ENCODE measurements at regions of chr14 and their contacts with region 1.

Region 1: GRCh38 chr14:53152890-53153701 is at the start of gene DDHD1:
- DNase-seq: peak; percentile 83
- H3K4me3 Mint-ChIP-seq: peak within 1 kb of the TSS; percentile 100
- H3K27ac Mint-ChIP-seq: peak within 1 kb of the TSS; percentile 99
- H3K4me1 Mint-ChIP-seq: peaks cover 53% of the 10 kb centered on the region
- H3K27me3 Mint-ChIP-seq: peaks cover 2% of the 10 kb centered on the region
- total RNA-seq, gene DDHD1: 85.5 and 93.1 TPM in 2 replicates

Region 2: DNA sequence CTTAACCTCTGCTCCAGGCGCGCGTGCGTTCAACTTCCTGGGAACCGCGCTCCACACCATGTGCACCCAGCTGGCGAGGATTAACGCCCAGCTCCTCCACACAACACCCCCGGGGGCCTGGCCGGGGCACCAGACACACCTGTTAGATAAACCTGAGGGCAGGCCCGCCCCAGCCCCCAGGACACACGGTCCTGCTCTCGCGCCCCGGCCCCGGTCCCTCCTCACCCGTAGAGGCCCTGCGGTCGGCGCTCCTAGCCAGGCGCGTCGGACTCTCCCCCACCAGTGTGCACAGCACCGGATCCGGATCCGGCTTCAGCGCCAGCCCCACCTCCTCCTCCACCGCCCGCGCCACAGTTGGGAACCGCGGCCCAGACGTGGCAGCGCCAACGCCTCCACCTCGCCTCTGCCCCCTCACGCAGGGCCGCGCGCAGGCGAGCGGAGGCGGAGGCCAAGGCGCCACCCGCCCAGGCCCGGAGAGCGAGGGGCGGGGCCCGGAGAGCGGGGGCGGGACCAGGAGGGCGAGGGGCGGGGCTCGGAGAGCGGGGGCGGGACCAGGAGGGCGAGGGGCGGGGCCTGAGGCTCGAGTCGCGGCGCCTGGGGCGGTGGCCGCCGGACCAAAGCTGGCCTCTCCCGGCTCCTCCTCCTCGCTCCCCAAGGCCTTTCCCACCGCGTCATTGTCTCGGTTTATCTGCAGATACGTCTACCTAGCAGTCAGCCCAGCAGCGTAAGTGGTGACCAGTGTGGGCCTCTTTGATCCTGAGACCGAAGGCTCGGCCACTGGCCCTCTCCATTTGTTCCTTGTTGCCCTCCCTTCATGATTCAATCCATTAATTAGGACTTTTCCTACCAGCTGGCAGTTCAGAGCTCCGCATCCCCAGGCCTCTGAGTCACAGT is 361.6 kb before region 1 on chr14 and contains the start of gene GNPNAT1:
- intact Hi-C with region 1: loop called (anchors 5 kb)
- DNase-seq: peak; percentile 85
- H3K4me3 Mint-ChIP-seq: peak within 1 kb of the TSS; percentile 92
- H3K27ac Mint-ChIP-seq: peak within 1 kb of the TSS; percentile 86
- H3K4me1 Mint-ChIP-seq: peaks cover 32% of the 10 kb centered on the region
- H3K27me3 Mint-ChIP-seq: no peaks in the 10 kb centered on the region
- total RNA-seq, gene GNPNAT1: 26.0 and 26.4 TPM in 2 replicates

Region 3: GRCh38 chr14:53055003-53055402 is 98.1 kb before region 1 on chr14:
- intact Hi-C with region 1: loop called (anchors 2 kb)
- DNase-seq: no peak
- H3K4me3 Mint-ChIP-seq: no peak overlapping the region
- H3K27ac Mint-ChIP-seq: no peak overlapping the region
- H3K4me1 Mint-ChIP-seq: peaks cover 13% of the 10 kb centered on the region
- H3K27me3 Mint-ChIP-seq: no peaks in the 10 kb centered on the region

Region 4: GRCh38 chr14:53167602-53168328 is 14.7 kb after region 1 on chr14:
- intact Hi-C with region 1: loop called (anchors 1 kb)
- DNase-seq: no peak
- H3K4me3 Mint-ChIP-seq: no peak overlapping the region
- H3K27ac Mint-ChIP-seq: no peak overlapping the region
- H3K4me1 Mint-ChIP-seq: peaks cover 17% of the 10 kb centered on the region
- H3K27me3 Mint-ChIP-seq: no peaks in the 10 kb centered on the region

Region 5: DNA sequence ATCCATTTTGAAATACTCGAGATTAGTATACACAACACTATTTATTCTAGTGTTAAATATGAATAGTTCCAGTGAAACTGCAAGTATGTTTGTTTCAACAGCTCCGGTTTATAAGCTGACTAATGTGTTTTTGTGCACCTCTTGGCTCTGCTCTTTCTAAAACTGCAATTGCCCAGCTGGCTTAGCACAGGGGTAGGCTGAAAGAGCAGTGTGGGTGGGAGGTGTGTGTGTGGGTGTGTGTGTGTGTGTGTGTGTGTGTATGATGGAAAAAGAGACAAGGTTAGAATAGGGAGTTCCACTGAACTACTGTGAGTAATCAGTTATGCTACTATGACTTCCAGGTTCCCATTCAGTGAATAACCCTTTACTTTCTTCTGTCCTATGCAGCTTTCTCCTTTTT is 37.8 kb after region 1 on chr14:
- intact Hi-C with region 1: loop called (anchors 1 kb)
- DNase-seq: peak; percentile 28
- H3K4me3 Mint-ChIP-seq: peak overlapping the region; percentile 80
- H3K27ac Mint-ChIP-seq: peak overlapping the region; percentile 99
- H3K4me1 Mint-ChIP-seq: peaks cover 54% of the 10 kb centered on the region
- H3K27me3 Mint-ChIP-seq: peaks cover 4% of the 10 kb centered on the region

Region 6: GRCh38 chr14:53306267-53306721 is 153.2 kb after region 1 on chr14:
- intact Hi-C with region 1: loop called (anchors 5 kb)
- DNase-seq: peak; percentile 5
- H3K4me3 Mint-ChIP-seq: peak overlapping the region; percentile 76
- H3K27ac Mint-ChIP-seq: no peak overlapping the region
- H3K4me1 Mint-ChIP-seq: peaks cover 11% of the 10 kb centered on the region
- H3K27me3 Mint-ChIP-seq: peaks cover 8% of the 10 kb centered on the region

Measured in activated T-helper 1 cell treated with anti-CD3 and anti-CD28 coated beads, Interleukin-12 subunit alpha, Interleukin-12 subunit beta, Interleukin-2, Interleukin-4 antibody, amounts not matched to agents 30 ng/mL and 10 ng/mL and 1 ng/mL, durations not matched to agents 14 hours and 24 hours and 36 hours (primary cell).